MCF 10A (cell line): ENCODE measurements at regions of chr21 and their contacts with region 1.

Region 1: GRCh38 chr21:34745557-34746255 is 76.9 kb downstream of the CLIC6 start:
- DNase-seq: peak; percentile 83
- H3K4me3 Mint-ChIP-seq: no peak overlapping the region
- H3K27ac Mint-ChIP-seq: no peak overlapping the region
- H3K4me1 Mint-ChIP-seq: peaks cover 26% of the 10 kb centered on the region
- H3K27me3 Mint-ChIP-seq: no peaks in the 10 kb centered on the region
- CTCF ChIP-seq: peak; percentile 95

Region 2: DNA sequence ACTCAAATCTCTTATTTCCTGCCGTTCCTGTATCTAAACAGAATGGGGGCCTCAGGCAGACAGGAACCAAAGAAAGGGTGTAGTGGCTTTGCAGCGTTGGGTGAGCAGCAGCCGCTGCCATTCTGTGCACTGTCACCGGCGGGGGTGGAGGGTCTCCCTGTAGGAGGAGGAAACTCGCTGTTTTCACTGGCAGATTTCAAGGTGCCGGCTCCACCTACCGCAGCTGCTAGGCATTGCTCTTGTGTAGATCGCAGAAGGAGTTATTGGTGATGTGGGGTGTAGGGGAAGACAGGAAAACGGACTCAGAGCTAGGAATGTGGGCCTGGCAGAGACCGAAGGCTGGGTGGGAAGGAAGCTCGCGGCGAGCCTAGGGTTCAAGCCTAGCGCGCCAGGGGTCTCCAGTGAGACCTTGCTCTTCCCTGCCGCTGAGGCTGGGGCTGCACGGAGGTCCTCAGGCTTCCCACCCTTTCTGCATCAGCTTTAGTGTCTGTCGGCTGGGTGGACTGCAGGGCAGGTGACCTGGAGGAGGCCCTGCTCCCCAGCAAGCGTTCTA is 850.9 kb before region 1 on chr21:
- CTCF ChIA-PET with region 1: no interaction called
- POLR2A ChIA-PET with region 1: no interaction called
- intact Hi-C with region 1: no loop called
- DNase-seq: peak; percentile 68
- H3K4me3 Mint-ChIP-seq: no peak overlapping the region
- H3K27ac Mint-ChIP-seq: no peak overlapping the region
- H3K4me1 Mint-ChIP-seq: peaks cover 7% of the 10 kb centered on the region
- H3K27me3 Mint-ChIP-seq: no peaks in the 10 kb centered on the region
- CTCF ChIP-seq: peak; percentile 36

Region 3: GRCh38 chr21:34688145-34688544 is 57.6 kb before region 1 on chr21:
- CTCF ChIA-PET with region 1: interaction called, 56 read pairs
- POLR2A ChIA-PET with region 1: interaction called, 5 read pairs
- intact Hi-C with region 1: loop called (anchors 1 kb)
- DNase-seq: peak; percentile 65
- H3K4me3 Mint-ChIP-seq: peak overlapping the region; percentile 33
- H3K27ac Mint-ChIP-seq: no peak overlapping the region
- H3K4me1 Mint-ChIP-seq: peaks cover 11% of the 10 kb centered on the region
- H3K27me3 Mint-ChIP-seq: no peaks in the 10 kb centered on the region
- CTCF ChIP-seq: peak; percentile 67

Region 4: DNA sequence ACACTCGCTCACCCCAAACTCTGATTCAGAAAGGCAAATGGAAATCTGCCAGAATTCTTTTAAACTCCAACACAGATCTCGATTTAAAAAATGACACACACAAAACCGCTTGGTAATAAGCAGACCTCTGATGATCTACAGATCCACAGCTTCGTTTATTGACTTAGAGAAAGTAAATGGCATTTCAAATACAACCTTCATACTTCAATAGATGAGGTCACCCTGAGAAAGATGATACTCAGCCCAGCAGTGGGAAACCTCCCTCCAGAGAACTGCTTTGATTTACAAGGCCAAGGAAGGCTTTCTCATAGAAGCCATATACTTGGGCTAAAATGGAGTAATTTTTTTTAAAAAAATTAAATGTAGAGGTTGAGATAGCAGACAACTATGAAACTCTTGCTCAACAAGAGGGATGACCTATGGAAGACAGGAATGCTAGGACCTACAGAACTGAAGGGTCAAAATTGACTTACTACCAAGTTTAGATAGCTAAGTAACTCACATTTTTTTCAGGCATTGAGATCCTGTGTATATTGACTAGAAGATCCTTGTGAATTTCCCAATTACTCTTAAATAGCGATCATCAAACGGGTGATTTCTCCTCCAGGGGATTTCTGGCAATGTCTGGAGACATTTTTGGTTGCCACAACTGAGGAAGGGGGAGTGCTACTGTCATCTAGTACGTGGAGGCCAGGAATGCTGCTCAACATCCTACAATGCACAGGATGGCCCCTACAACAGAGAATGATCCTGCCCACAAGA is 67.0 kb after region 1 on chr21:
- CTCF ChIA-PET with region 1: interaction called, 5 read pairs
- POLR2A ChIA-PET with region 1: interaction called, 9 read pairs
- intact Hi-C with region 1: loop called (anchors 2 kb)
- DNase-seq: peak; percentile 57
- H3K4me3 Mint-ChIP-seq: peak overlapping the region; percentile 9
- H3K27ac Mint-ChIP-seq: no peak overlapping the region
- H3K4me1 Mint-ChIP-seq: peaks cover 61% of the 10 kb centered on the region
- H3K27me3 Mint-ChIP-seq: no peaks in the 10 kb centered on the region
- CTCF ChIP-seq: no peak

Region 5: GRCh38 chr21:35400233-35400957 is 654.7 kb after region 1 on chr21:
- CTCF ChIA-PET with region 1: interaction called, 24 read pairs
- POLR2A ChIA-PET with region 1: interaction called, 7 read pairs
- intact Hi-C with region 1: loop called (anchors 1 kb)
- DNase-seq: peak; percentile 74
- H3K4me3 Mint-ChIP-seq: no peak overlapping the region
- H3K27ac Mint-ChIP-seq: peak overlapping the region; percentile 10
- H3K4me1 Mint-ChIP-seq: peaks cover 17% of the 10 kb centered on the region
- H3K27me3 Mint-ChIP-seq: no peaks in the 10 kb centered on the region
- CTCF ChIP-seq: peak; percentile 65

Region 6: GRCh38 chr21:35840197-35840799 is 1094.6 kb after region 1 on chr21:
- CTCF ChIA-PET with region 1: interaction called, 14 read pairs
- POLR2A ChIA-PET with region 1: no interaction called
- intact Hi-C with region 1: loop called (anchors 2 kb)
- DNase-seq: peak; percentile 72
- H3K4me3 Mint-ChIP-seq: no peak overlapping the region
- H3K27ac Mint-ChIP-seq: no peak overlapping the region
- H3K4me1 Mint-ChIP-seq: no peaks in the 10 kb centered on the region
- H3K27me3 Mint-ChIP-seq: no peaks in the 10 kb centered on the region
- CTCF ChIP-seq: peak; percentile 78